ENCODE measurements at regions of chr20 and their contacts with region 1.

Region 1: GRCh38 chr20:3679749-3680700 is 1.8 kb downstream of the ADAM33 start:
- DNase-seq: no peak

Region 2: DNA sequence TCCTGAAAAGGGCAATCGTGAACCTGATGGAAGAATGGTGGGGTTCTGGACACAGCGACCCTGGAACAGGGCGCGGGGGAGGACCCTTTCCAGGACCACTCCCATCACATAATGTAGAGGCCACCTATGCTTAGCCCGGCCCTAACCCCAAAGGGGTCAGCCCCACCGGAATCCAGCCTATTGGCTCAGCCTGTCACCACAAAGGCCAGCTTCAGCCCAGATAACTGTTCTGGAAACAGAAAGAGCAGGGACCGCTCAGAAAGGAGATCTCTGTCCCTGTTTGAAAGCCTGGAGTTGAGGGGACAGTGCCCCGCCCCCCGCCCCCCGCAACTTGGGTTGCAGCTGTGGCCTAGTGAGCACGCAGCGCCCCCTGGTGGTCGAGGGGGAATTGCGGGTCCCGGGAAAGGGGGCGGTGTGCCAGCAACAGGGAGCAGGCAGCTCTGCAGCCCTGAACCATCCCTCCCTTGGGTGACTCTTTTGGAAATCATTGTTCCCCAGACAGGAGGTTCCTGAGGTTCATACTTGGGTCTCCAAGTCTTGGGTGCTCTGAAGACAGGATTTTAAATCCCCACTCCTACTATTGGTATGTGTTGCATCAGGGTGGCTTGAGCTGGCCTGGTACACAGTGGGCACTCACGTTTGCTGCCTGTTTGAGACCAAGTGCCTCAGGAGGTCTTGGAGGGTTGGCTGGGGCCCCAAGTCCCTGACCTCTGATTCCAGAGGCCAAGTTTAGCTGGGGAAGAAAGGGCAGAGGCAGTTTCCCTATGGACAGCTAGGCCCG is 30.9 kb after region 1 on chr20:
- intact Hi-C with region 1: loop called (anchors 1 kb)
- DNase-seq: peak; percentile 86

Region 3: DNA sequence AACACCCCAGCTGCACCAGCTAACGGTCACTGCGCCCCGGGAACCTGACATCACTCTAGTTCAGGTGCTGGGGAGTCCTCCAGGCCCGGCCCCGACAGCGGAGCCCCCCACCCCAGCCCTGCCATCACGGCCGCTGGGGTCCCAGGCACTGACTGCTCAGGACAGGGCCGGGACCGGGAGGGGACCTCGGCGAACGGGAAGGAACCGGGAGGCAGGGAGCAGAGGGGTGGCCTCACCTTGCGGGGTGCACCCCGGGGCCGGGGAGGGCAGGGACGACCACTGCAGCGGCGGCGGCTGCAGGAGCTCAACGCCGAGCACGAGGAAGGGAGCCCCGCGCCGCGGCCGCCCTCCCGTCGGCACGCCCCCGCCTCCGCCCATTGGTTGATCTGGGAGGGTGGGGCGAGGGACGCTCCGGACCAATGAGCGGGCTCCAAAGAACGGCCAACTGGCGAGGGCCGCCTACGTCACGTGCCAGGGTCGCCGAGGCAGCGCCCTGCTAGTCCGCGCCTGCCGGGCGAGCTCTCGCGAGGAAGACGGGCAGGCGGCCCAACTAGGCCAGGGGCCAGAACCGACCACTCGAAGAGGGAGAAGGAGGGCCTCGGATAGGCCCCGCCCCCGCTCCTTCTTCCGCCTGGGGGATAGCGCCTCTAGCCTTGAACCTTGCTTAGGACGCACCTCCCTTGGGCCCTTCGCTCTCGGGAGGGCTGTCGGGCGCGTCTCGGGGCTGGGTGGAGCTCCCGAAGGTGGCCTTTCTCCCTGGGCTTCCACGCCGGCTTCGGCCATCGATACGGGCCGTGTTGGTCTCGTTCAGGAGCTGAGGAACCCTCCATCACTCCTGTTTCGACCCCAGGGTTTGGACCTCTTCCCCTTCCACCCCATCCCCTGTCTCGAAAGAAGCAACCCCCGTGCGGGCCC is 87.7 kb after region 1 on chr20 and contains the start of gene ADISSP:
- intact Hi-C with region 1: loop called (anchors 5 kb)
- DNase-seq: peak; percentile 100
- total RNA-seq, gene ADISSP: 9.9 TPM

Region 4: GRCh38 chr20:3846740-3847428 is 166.9 kb after region 1 on chr20 and contains the start of gene MAVS:
- intact Hi-C with region 1: loop called (anchors 10 kb)
- DNase-seq: peak; percentile 96
- total RNA-seq, gene MAVS: 39.5 TPM

Region 5: GRCh38 chr20:4089756-4090487 is 409.9 kb after region 1 on chr20:
- intact Hi-C with region 1: loop called (anchors 5 kb)
- DNase-seq: peak; percentile 79

Measured in cardiac septum (tissue), 1 donor.